ENCODE measurements at regions of chr2 and their contacts with region 1.

Region 1: DNA sequence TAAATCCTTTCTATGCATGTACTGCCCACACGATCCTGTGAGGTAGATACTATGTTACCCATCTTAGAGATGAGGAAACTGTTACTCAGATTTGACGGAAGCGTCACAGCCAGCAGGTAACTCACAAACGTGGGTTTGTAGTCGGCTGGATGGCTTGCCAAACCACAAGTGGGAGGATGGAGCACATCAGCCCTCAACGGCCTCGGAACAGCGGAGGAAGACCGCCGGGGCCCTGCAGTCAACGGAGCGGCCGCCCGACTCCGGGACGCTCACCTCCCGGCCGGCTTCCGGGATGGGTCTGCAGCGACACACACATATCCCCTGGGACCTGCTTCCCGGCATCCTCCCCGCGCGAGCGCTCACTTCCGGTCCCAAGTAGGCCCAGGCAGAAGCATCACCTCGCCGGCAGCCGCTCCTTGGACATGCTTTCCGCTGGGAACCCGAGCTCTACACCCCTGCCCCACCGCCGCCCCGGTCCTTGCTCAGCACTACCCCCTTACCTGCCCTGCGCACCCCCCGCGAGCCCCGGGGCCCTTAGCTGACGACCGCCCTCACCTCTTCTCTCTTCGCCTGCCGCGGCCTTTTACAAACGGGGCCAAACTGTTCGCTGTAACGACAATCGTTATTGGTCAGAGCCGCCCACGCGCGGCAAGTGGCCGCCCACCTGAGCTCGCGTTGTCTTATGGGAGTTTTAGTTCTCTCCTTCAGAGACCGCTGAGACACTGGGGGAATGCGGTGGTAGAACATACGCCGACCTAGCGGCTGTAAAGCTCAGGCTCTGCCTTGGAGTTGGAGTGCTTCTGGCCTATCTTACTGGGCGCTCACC is at the start of gene C2orf42:
- DNase-seq: peak; percentile 95
- H3K4me3 Mint-ChIP-seq: peak within 1 kb of the TSS; percentile 95
- H3K27ac Mint-ChIP-seq: peak within 1 kb of the TSS; percentile 99
- H3K4me1 Mint-ChIP-seq: peaks cover 23% of the 10 kb centered on the region
- H3K27me3 Mint-ChIP-seq: peaks cover 3% of the 10 kb centered on the region
- total RNA-seq, gene C2orf42: 21.6 and 24.1 TPM in 2 replicates

Region 2: GRCh38 chr2:69717861-69718273 is 472.8 kb before region 1 on chr2:
- intact Hi-C with region 1: no loop called
- DNase-seq: no peak
- H3K4me3 Mint-ChIP-seq: no peak overlapping the region
- H3K27ac Mint-ChIP-seq: no peak overlapping the region
- H3K4me1 Mint-ChIP-seq: peaks cover 20% of the 10 kb centered on the region
- H3K27me3 Mint-ChIP-seq: peaks cover 2% of the 10 kb centered on the region

Region 3: DNA sequence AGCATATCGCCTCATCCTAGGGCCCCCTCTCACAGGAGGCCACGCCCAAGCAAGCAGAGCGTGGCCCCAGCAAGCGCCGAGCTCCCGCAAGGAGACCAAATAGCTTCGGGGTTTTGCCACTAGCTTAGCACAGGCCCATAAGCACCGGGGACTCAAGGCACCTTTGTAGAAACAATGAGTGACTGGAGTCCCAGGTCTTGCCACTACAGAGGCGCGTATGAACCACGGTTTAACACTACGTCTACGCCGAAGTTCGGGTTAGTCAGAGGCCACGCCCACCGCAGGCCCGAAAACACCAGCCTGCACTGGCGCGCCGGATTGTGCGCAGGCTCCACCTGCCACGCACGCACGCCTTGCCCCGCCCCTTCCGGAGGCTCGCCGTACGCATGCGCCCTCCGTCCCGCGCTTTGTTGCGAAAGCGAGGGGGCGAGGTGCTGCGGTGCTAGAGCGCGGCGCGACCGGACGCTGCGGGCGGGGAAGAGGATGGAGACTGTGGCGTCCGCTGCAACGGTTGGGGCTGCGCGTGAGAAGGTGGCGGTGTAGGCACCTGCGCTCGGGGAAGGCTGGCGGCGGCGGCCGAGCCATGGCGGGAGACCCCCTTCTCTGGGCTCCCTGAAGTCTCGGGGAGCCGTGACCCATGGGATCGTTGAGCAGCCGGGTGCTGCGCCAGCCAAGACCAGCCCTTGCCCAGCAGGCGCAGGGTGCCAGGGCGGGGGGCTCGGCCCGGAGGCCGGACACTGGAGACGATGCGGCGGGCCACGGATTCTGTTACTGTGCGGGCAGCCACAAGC is 361.2 kb before region 1 on chr2 and contains the start of gene GMCL1:
- intact Hi-C with region 1: loop called (anchors 1 kb)
- DNase-seq: peak; percentile 99
- H3K4me3 Mint-ChIP-seq: peak within 1 kb of the TSS; percentile 98
- H3K27ac Mint-ChIP-seq: peak within 1 kb of the TSS; percentile 95
- H3K4me1 Mint-ChIP-seq: peaks cover 59% of the 10 kb centered on the region
- H3K27me3 Mint-ChIP-seq: no peaks in the 10 kb centered on the region
- total RNA-seq, gene GMCL1: 25.6 and 32.8 TPM in 2 replicates

Region 4: GRCh38 chr2:69946351-69947077 is 244.1 kb before region 1 on chr2:
- intact Hi-C with region 1: loop called (anchors 1 kb)
- DNase-seq: peak; percentile 66
- H3K4me3 Mint-ChIP-seq: peak overlapping the region; percentile 67
- H3K27ac Mint-ChIP-seq: peak overlapping the region; percentile 86
- H3K4me1 Mint-ChIP-seq: peaks cover 52% of the 10 kb centered on the region
- H3K27me3 Mint-ChIP-seq: peaks cover 5% of the 10 kb centered on the region

Region 5: DNA sequence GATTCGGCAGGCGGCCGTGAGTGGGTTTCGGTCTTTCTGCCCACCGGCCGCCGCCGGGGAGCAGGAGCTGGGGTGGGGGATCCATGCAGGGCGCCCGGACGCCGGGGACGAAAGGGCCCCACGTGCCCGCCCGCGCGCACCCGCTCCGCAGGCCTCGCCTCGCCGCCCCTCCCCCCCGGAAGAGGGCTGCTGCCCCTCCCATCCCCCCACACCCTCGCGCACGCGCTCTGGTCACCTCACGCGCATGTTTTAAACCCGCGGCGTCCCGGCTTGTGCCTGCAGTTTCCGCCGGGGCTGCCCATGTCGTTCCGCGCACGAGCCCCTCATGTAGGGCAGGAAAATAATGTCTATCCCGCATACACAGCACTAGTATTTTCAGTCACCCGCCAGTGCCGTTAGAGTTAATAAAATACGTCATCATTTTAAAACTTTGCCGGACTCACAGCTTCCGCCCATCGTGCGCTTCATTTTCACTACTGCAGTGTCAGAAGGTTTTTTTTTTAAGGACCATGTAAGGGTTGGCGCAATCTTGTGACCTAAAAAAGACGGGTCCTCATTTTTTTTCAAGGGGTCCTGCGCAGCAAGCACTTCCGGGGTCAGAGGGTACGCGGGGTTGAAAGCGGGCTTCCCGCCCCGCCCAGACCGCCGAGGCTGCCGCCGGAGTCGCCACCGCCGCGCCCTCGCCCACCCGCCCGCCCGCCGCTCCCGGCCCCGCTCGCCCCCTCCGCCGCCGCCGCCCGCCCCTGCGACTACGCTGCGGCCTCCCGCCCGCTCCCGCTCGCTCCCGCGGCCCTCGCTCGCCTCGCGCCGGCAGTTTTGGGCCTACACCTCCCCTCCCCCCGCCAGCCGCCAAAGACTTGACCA is 103.6 kb before region 1 on chr2 and contains the start of gene PCBP1:
- intact Hi-C with region 1: loop called (anchors 1 kb)
- DNase-seq: peak; percentile 91
- H3K4me3 Mint-ChIP-seq: peak within 1 kb of the TSS; percentile 99
- H3K27ac Mint-ChIP-seq: peak within 1 kb of the TSS; percentile 100
- H3K4me1 Mint-ChIP-seq: peaks cover 56% of the 10 kb centered on the region
- H3K27me3 Mint-ChIP-seq: no peaks in the 10 kb centered on the region
- total RNA-seq, gene PCBP1: 426 and 427 TPM in 2 replicates

Region 6: DNA sequence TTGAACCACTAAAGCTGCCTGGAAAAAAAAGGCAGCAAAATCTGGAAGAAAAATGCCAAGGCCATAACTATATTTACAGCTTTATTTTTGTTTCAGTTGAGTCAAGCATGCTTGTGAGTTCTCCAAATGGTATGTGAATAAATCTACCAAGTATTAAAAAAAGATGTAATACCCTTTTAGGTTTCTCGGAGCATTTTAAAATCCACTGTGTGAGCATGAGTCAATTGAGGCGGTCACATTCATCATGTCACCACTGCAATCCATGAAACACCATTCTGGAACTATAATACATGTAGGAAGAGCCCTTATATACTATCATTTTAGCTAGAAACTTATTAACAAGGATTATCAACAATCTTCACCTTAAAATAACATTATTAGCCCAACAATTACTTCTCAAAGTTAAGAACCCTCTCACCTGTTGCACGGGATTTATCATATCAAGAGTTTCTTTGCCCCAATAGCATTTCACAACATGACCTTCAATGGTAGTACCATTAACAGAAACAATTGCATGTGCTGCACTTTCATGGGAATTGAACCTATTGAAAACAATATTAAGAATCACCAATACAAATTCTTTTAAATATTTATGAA is 24.4 kb after region 1 on chr2:
- intact Hi-C with region 1: loop called (anchors 2 kb)
- DNase-seq: no peak
- H3K4me3 Mint-ChIP-seq: no peak overlapping the region
- H3K27ac Mint-ChIP-seq: no peak overlapping the region
- H3K4me1 Mint-ChIP-seq: peaks cover 22% of the 10 kb centered on the region
- H3K27me3 Mint-ChIP-seq: no peaks in the 10 kb centered on the region

Region 7: DNA sequence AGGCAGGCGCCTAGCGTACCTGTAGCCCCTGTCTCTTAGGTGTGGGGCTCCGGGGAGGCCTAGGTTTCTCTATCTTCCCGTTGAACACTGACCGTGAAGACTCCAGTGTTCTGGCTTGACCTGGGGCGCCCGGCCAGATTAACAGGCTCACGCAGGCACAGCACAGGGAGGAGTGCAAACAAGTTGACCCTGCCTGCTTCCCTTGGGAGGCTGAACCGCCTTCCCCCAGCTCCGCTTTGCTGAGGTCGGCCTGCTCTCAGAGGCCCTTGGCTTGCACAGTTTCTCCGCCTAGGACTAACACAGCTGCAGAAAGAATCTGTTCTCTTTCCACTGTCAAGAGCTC is 67.9 kb after region 1 on chr2:
- intact Hi-C with region 1: loop called (anchors 1 kb)
- DNase-seq: no peak
- H3K4me3 Mint-ChIP-seq: peak overlapping the region; percentile 87
- H3K27ac Mint-ChIP-seq: peak overlapping the region; percentile 23
- H3K4me1 Mint-ChIP-seq: peaks cover 30% of the 10 kb centered on the region
- H3K27me3 Mint-ChIP-seq: no peaks in the 10 kb centered on the region

Measured in activated T-helper 1 cell treated with anti-CD3 and anti-CD28 coated beads, Interleukin-12 subunit alpha, Interleukin-12 subunit beta, Interleukin-2, Interleukin-4 antibody, amounts not matched to agents 30 ng/mL and 10 ng/mL and 1 ng/mL, durations not matched to agents 14 hours and 24 hours and 36 hours (primary cell).